Activated CD4-positive, alpha-beta memory T cell treated with anti-CD3 and anti-CD28 coated beads for 36 hours (primary cell): ENCODE measurements at regions of chr22 and their contacts with region 1.

Region 1: DNA sequence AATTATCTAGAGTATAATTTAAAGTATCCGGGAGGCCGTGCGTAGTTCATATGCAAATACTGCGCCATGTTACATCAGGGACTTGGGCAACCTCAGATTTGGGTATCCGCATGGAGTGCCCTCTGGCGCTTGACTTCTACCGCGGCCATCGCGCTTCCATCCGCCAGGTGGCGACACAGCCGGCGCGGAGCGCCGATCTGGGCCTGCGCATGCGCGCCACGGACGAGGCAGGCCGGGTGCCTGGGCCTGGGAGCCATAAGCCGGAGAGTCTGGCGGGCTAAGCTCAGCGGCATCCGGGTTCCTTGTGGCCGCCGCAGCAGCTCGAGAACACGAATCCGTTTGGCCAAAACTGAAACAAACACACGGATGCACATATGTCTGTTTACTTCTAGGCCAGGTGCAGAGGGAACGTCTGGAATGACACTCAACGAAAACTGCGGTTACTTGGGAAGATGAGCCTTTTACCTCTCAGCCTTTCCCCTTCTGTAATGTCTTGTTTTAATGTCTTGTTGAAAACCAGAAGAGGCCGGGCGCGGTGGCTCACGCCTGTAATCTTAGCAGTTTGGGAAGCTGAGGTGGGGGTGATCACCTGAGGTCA is 21.9 kb downstream of the SNU13 start:
- DNase-seq: peak; percentile 97
- H3K4me3 Mint-ChIP-seq: peak overlapping the region; percentile 86
- H3K27ac Mint-ChIP-seq: peak overlapping the region; percentile 97
- H3K4me1 Mint-ChIP-seq: peaks cover 13% of the 10 kb centered on the region
- H3K27me3 Mint-ChIP-seq: no peaks in the 10 kb centered on the region

Region 2: DNA sequence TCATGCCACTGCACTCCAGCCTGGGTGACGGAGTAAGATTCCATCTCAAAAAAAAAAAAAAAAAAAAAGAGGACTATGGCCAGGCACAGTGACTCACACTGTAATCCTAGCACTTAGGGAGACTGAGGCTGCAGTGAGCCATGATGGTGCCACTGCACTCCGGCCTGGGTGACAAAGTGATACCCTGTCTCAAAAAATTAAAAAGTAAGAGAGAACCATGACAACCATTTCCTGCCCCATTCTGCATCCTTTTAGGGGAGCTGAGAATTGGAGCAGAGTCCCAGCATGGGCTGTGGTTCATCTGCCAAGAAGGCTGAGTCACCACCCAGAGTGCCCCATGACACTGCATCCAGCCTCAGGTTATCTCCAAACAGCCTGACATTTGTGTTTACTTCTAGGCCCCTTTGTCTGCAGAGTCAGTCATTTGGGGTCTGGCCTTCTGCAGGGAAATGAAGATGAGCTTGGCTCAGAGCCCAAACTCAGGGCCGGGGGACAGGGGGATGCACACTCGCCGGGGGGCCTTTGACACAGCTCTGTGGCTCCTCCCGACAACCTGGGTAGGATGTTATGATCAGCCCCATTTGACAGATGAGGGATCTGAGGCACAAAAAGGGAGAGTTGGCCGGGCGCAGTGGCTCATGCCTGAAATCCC is 101.2 kb before region 1 on chr22:
- CTCF ChIA-PET with region 1: no interaction called
- POLR2A ChIA-PET with region 1: no interaction called
- intact Hi-C with region 1: no loop called
- DNase-seq: peak; percentile 64
- H3K4me3 Mint-ChIP-seq: no peak overlapping the region
- H3K27ac Mint-ChIP-seq: peak overlapping the region; percentile 39
- H3K4me1 Mint-ChIP-seq: peaks cover 3% of the 10 kb centered on the region
- H3K27me3 Mint-ChIP-seq: peaks cover 8% of the 10 kb centered on the region

Region 3: GRCh38 chr22:41636467-41636866 is 30.3 kb before region 1 on chr22:
- CTCF ChIA-PET with region 1: interaction called, 10 read pairs
- POLR2A ChIA-PET with region 1: no interaction called
- intact Hi-C with region 1: no loop called
- DNase-seq: no peak
- H3K4me3 Mint-ChIP-seq: no peak overlapping the region
- H3K27ac Mint-ChIP-seq: no peak overlapping the region
- H3K4me1 Mint-ChIP-seq: no peaks in the 10 kb centered on the region
- H3K27me3 Mint-ChIP-seq: no peaks in the 10 kb centered on the region

Region 4: DNA sequence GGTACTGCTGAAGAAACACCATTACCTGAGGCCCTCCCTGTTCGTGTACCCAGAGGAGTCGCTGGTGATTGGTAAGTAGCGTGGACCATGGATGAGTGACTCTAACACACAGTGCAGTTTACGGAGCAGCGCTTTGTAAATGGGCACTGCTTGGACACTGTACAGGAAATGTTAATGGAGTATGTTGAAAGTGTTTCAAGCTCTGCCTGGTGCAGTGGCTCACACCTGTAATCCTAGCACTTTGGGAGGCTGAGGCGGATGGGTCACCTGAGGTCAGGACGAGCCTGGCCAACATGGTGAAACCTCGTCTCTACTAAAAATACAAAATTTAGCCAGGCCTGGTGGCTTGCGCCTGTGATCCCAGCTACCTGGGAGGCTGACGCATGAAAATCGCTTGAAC is 15.9 kb before region 1 on chr22:
- CTCF ChIA-PET with region 1: interaction called, 15 read pairs
- POLR2A ChIA-PET with region 1: interaction called, 3 read pairs
- intact Hi-C with region 1: no loop called
- DNase-seq: no peak
- H3K4me3 Mint-ChIP-seq: no peak overlapping the region
- H3K27ac Mint-ChIP-seq: no peak overlapping the region
- H3K4me1 Mint-ChIP-seq: peaks cover 7% of the 10 kb centered on the region
- H3K27me3 Mint-ChIP-seq: no peaks in the 10 kb centered on the region

Region 5: DNA sequence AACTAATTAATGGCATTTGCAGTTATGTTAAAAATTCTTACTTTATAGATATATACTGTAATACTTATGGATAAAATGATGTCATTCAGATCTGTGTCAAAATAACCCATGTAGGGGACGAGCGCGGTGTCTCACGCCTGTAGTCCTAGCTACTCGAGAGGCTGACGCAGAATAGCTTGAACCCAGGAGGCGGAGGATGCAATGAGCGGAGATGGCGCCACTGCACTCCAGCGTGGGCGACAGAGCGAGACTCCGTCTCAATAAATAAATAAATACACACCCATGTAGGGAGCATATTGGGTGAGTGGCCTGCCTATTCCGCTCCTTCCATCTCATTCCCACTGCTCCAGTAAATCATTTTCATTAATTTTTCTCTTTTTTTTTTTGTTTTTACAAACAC is 14.9 kb after region 1 on chr22:
- CTCF ChIA-PET with region 1: interaction called, 28 read pairs
- POLR2A ChIA-PET with region 1: no interaction called
- intact Hi-C with region 1: no loop called
- DNase-seq: no peak
- H3K4me3 Mint-ChIP-seq: peak overlapping the region; percentile 99
- H3K27ac Mint-ChIP-seq: no peak overlapping the region
- H3K4me1 Mint-ChIP-seq: peaks cover 24% of the 10 kb centered on the region
- H3K27me3 Mint-ChIP-seq: no peaks in the 10 kb centered on the region

Region 6: DNA sequence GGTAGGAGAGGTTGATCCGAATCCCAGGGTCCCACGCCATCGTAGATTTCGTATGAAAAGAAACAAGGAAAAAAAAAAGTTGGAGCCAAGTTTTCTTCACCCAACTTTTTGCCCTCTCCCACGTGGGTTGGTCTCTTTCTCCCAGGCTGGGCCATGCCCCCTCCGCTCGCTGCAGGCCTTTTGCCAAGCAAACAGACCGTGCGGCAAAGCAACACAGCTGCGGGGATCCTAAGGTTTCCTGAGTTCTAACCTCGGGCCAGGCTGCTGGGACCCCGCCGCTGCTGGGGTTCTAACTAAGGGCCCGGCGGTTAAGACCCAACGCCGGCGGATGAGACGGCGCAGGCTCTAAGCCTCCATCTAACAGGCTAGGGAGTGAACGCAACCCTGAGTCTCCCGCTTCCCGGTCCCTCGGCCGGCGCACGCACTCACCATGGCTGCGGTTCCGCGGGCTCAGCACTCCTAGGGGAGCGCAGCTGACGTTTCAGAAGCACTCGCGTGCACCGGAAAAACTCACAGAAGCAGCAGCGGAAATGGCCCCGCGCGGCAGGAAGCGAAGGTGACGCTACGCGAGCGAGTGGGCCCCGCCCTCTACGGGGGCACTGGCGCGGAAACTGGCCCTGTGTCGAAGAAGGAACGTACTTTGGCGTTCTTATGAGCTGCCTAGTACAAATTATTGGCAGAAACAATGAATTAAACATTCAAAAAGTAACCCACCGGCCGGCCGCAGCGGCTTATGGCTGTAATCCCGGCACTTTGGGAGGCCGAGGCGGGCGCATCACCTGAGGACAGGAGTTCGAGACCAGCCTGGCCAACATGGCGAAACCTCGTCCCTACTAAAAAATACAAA is 21.8 kb after region 1 on chr22 and contains the start of gene SNU13:
- CTCF ChIA-PET with region 1: interaction called, 28 read pairs
- POLR2A ChIA-PET with region 1: interaction called, 14 read pairs
- intact Hi-C with region 1: loop called (anchors 1 kb)
- DNase-seq: peak; percentile 96
- H3K4me3 Mint-ChIP-seq: peak within 1 kb of the TSS; percentile 99
- H3K27ac Mint-ChIP-seq: peak within 1 kb of the TSS; percentile 97
- H3K4me1 Mint-ChIP-seq: peaks cover 34% of the 10 kb centered on the region
- H3K27me3 Mint-ChIP-seq: no peaks in the 10 kb centered on the region
- total RNA-seq, gene SNU13: 236 to 242 TPM

Region 7: GRCh38 chr22:41800348-41801146 is 133.8 kb after region 1 on chr22 and contains the start of gene CCDC134:
- CTCF ChIA-PET with region 1: interaction called, 16 read pairs
- POLR2A ChIA-PET with region 1: no interaction called
- intact Hi-C with region 1: loop called (anchors 1 kb)
- DNase-seq: peak; percentile 95
- H3K4me3 Mint-ChIP-seq: peak within 1 kb of the TSS; percentile 98
- H3K27ac Mint-ChIP-seq: peak within 1 kb of the TSS; percentile 95
- H3K4me1 Mint-ChIP-seq: peaks cover 35% of the 10 kb centered on the region
- H3K27me3 Mint-ChIP-seq: no peaks in the 10 kb centered on the region
- total RNA-seq, gene CCDC134: 16.1 to 17.6 TPM

Region 8: DNA sequence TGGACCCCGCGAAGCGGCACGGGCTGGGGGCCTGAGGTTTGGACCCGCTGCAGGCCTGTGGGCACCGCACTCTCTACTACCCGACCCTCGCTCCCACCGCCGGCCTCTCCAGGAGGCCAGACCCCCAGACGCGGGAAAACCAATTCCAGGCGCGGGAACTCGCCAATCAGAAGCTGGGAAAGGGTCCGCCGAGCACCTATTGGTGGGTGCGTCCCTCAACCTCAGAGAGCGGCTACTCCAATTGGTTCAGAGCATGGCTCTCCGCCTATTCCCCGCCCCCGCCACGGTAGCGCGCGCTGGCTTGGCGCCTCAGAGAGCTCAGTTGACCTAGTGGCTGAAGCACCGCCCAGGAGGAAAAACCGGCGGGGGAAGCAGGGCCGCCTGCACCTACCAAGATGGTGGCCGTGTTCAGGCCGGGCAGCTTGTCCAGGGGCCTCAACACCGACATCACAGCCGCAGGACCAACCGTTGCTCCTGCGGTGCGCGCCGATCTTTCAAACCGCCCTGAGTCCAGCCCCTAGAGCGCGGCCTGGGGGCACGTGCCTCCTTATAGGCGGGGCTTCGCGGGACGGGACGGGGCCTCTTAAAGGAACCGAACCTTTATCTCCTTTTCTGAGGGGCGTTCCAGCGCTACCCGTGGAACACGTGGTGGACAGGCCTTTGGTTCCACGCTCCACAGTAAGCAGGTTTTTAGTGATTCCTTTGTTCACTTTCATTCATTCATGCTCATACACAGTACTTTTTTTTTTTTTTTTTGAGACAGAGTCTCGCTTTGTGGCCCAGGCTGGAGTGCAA is 280.1 kb after region 1 on chr22 and contains the start of gene CENPM:
- CTCF ChIA-PET with region 1: interaction called, 13 read pairs
- POLR2A ChIA-PET with region 1: interaction called, 3 read pairs
- intact Hi-C with region 1: no loop called
- DNase-seq: peak; percentile 96
- H3K4me3 Mint-ChIP-seq: peak within 1 kb of the TSS; percentile 98
- H3K27ac Mint-ChIP-seq: peak within 1 kb of the TSS; percentile 87
- H3K4me1 Mint-ChIP-seq: peaks cover 52% of the 10 kb centered on the region
- H3K27me3 Mint-ChIP-seq: no peaks in the 10 kb centered on the region
- total RNA-seq, gene CENPM: 99.9 to 106 TPM

Region 9: DNA sequence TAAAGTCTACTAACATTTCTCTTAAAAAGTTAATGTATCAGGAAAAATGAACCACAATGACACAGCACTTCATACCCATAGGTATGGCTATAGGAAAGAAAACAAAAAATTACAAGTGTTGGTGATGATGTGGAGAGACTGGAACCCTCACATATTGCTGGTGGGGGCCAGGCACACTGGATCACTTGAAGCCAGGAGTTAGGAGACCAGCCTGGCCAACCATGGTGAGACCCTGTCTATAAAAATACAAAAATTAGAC is 577.0 kb after region 1 on chr22:
- CTCF ChIA-PET with region 1: no interaction called
- POLR2A ChIA-PET with region 1: no interaction called
- intact Hi-C with region 1: no loop called
- DNase-seq: no peak
- H3K4me3 Mint-ChIP-seq: no peak overlapping the region
- H3K27ac Mint-ChIP-seq: peak overlapping the region; percentile 38
- H3K4me1 Mint-ChIP-seq: peaks cover 46% of the 10 kb centered on the region
- H3K27me3 Mint-ChIP-seq: no peaks in the 10 kb centered on the region